Activated T-helper 1 cell treated with anti-CD3 and anti-CD28 coated beads, Interleukin-12 subunit alpha, Interleukin-12 subunit beta, Interleukin-2, Interleukin-4 antibody, amounts not matched to agents 30 ng/mL and 10 ng/mL and 1 ng/mL, durations not matched to agents 14 hours and 24 hours and 36 hours (primary cell): ENCODE measurements at regions of chr17 and their contacts with region 1.

Region 1: GRCh38 chr17:16068323-16068722 is 68.7 kb downstream of the TTC19 start:
- DNase-seq: no peak
- H3K4me3 Mint-ChIP-seq: no peak overlapping the region
- H3K27ac Mint-ChIP-seq: peak overlapping the region; percentile 6
- H3K4me1 Mint-ChIP-seq: peaks cover 7% of the 10 kb centered on the region
- H3K27me3 Mint-ChIP-seq: no peaks in the 10 kb centered on the region

Region 2: GRCh38 chr17:16091773-16092172 is 23.4 kb after region 1 on chr17:
- intact Hi-C with region 1: loop called (anchors 1 kb)
- DNase-seq: no peak
- H3K4me3 Mint-ChIP-seq: no peak overlapping the region
- H3K27ac Mint-ChIP-seq: no peak overlapping the region
- H3K4me1 Mint-ChIP-seq: peaks cover 7% of the 10 kb centered on the region
- H3K27me3 Mint-ChIP-seq: no peaks in the 10 kb centered on the region